ENCODE measurements at regions of chr13 and their contacts with region 1.

Region 1: DNA sequence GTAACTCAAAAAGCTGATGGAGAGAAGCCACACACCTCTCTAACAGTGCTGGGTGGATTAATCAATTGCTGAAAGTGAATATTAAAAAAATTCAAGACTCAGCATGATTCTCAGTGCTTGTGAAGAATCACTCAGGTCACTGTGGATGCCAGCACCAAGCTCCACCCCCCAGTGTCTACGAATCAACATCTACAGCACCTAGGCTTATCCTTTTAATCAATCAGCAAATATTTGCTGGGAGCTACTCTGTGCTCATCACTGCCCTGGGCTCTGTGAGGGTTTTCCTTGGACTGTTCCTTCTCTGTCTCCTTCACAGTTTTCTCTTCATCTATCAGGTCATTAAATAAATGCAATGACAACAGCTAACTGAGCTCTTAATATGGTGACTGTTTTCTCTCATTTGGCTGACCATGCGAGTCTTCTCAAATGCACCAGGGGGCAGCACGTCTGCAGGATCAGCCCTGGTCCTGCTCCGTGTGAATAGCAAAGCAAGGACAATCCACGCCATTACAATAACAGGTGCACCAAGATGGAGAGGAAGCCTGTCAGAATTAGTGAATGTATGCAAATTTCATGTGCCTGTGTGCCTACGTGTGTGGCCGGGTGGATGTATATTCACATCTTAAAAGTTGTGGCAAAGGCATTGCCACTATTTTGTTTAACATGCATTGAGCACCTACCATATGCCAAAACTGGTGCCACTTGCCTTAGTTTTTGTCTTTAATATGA is 14.6 kb upstream of the C13orf42 start:
- DNase-seq: peak; percentile 74
- ATAC-seq: peak; percentile 82
- H3K4me3 Mint-ChIP-seq: no peak overlapping the region
- H3K27ac Mint-ChIP-seq: no peak overlapping the region
- H3K4me1 Mint-ChIP-seq: peaks cover 11% of the 10 kb centered on the region
- H3K27me3 Mint-ChIP-seq: peaks cover 15% of the 10 kb centered on the region

Region 2: GRCh38 chr13:50936679-50937078 is 189.0 kb before region 1 on chr13:
- CTCF ChIA-PET with region 1: no interaction called
- POLR2A ChIA-PET with region 1: no interaction called
- intact Hi-C with region 1: no loop called
- DNase-seq: no peak
- ATAC-seq: no peak
- H3K4me3 Mint-ChIP-seq: no peak overlapping the region
- H3K27ac Mint-ChIP-seq: no peak overlapping the region
- H3K4me1 Mint-ChIP-seq: no peaks in the 10 kb centered on the region
- H3K27me3 Mint-ChIP-seq: no peaks in the 10 kb centered on the region

Region 3: GRCh38 chr13:51136276-51136980 is 10.8 kb after region 1 on chr13:
- CTCF ChIA-PET with region 1: interaction called, 16 read pairs
- POLR2A ChIA-PET with region 1: no interaction called
- intact Hi-C with region 1: no loop called
- DNase-seq: no peak
- ATAC-seq: no peak
- H3K4me3 Mint-ChIP-seq: no peak overlapping the region
- H3K27ac Mint-ChIP-seq: no peak overlapping the region
- H3K4me1 Mint-ChIP-seq: no peaks in the 10 kb centered on the region
- H3K27me3 Mint-ChIP-seq: no peaks in the 10 kb centered on the region

Region 4: GRCh38 chr13:51148952-51149573 is 23.4 kb after region 1 on chr13:
- CTCF ChIA-PET with region 1: interaction called, 15 read pairs
- POLR2A ChIA-PET with region 1: no interaction called
- intact Hi-C with region 1: no loop called
- DNase-seq: peak; percentile 44
- ATAC-seq: no peak
- H3K4me3 Mint-ChIP-seq: no peak overlapping the region
- H3K27ac Mint-ChIP-seq: no peak overlapping the region
- H3K4me1 Mint-ChIP-seq: peaks cover 10% of the 10 kb centered on the region
- H3K27me3 Mint-ChIP-seq: peaks cover 19% of the 10 kb centered on the region

Region 5: GRCh38 chr13:51222037-51222685 is 96.5 kb after region 1 on chr13 and contains the start of gene FAM124A:
- CTCF ChIA-PET with region 1: interaction called, 3 read pairs
- POLR2A ChIA-PET with region 1: no interaction called
- intact Hi-C with region 1: loop called in 1 of 2 experiments (anchors 5 kb)
- DNase-seq: peak; percentile 72
- ATAC-seq: peak; percentile 93
- H3K4me3 Mint-ChIP-seq: peak within 1 kb of the TSS; percentile 71
- H3K27ac Mint-ChIP-seq: no peak within 1 kb of the TSS
- H3K4me1 Mint-ChIP-seq: no peaks in the 10 kb centered on the region
- H3K27me3 Mint-ChIP-seq: peaks cover 43% of the 10 kb centered on the region
- total RNA-seq, gene FAM124A: 0.16 to 0.25 TPM

Region 6: GRCh38 chr13:51874651-51875050 is 749.0 kb after region 1 on chr13:
- CTCF ChIA-PET with region 1: no interaction called
- POLR2A ChIA-PET with region 1: no interaction called
- intact Hi-C with region 1: no loop called
- DNase-seq: no peak
- ATAC-seq: no peak
- H3K4me3 Mint-ChIP-seq: no peak overlapping the region
- H3K27ac Mint-ChIP-seq: no peak overlapping the region
- H3K4me1 Mint-ChIP-seq: peaks cover 7% of the 10 kb centered on the region
- H3K27me3 Mint-ChIP-seq: no peaks in the 10 kb centered on the region